Ovary (tissue), 10 donors: ENCODE measurements at regions of chr9 and their contacts with region 1.

Region 1: GRCh38 chr9:2620919-2621679 is 488 bp upstream of the VLDLR start:
- DNase-seq: peak; percentile 85 to 89 (median 87)
- H3K4me3 ChIP-seq: peak overlapping the region; percentile 86
- H3K27ac ChIP-seq: peak overlapping the region; percentile 91 to 95
- H3K4me1 ChIP-seq: peaks cover 2% of the 10 kb centered on the region
- H3K27me3 ChIP-seq: no peaks in the 10 kb centered on the region
- CTCF ChIP-seq: peak in 2 of 3 donors; percentile 20 to 37
- EP300 ChIP-seq: no peak
- POLR2A ChIP-seq: peak; percentile 60

Region 2: GRCh38 chr9:2132484-2133082 is 488.5 kb before region 1 on chr9:
- intact Hi-C with region 1: loop called in 3 of 4 experiments (anchors 10 kb)
- DNase-seq: no peak
- H3K4me3 ChIP-seq: no peak overlapping the region
- H3K27ac ChIP-seq: no peak overlapping the region
- H3K4me1 ChIP-seq: peaks cover 12% of the 10 kb centered on the region
- H3K27me3 ChIP-seq: no peaks in the 10 kb centered on the region
- CTCF ChIP-seq: peak; percentile 51 to 93 (median 82)
- EP300 ChIP-seq: no peak
- POLR2A ChIP-seq: no peak

Region 3: GRCh38 chr9:2234371-2234893 is 386.7 kb before region 1 on chr9:
- intact Hi-C with region 1: loop called in 1 of 4 experiments (anchors 10 kb)
- DNase-seq: peak; percentile 52 to 69 (median 57)
- H3K4me3 ChIP-seq: no peak overlapping the region
- H3K27ac ChIP-seq: peak overlapping the region in 1 of 2 donors; percentile 74
- H3K4me1 ChIP-seq: peaks cover 19% of the 10 kb centered on the region
- H3K27me3 ChIP-seq: no peaks in the 10 kb centered on the region
- CTCF ChIP-seq: no peak
- EP300 ChIP-seq: no peak
- POLR2A ChIP-seq: no peak

Region 4: GRCh38 chr9:2418619-2419018 is 202.5 kb before region 1 on chr9:
- intact Hi-C with region 1: loop called in 2 of 4 experiments (anchors 5 to 10 kb)
- DNase-seq: peak in 4 of 5 donors; percentile 36 to 49 (median 47)
- H3K4me3 ChIP-seq: no peak overlapping the region
- H3K27ac ChIP-seq: peak overlapping the region in 1 of 2 donors; percentile 77
- H3K4me1 ChIP-seq: peaks cover 8% of the 10 kb centered on the region
- H3K27me3 ChIP-seq: no peaks in the 10 kb centered on the region
- CTCF ChIP-seq: peak in 1 of 3 donors; percentile 10
- EP300 ChIP-seq: no peak
- POLR2A ChIP-seq: no peak

Region 5: DNA sequence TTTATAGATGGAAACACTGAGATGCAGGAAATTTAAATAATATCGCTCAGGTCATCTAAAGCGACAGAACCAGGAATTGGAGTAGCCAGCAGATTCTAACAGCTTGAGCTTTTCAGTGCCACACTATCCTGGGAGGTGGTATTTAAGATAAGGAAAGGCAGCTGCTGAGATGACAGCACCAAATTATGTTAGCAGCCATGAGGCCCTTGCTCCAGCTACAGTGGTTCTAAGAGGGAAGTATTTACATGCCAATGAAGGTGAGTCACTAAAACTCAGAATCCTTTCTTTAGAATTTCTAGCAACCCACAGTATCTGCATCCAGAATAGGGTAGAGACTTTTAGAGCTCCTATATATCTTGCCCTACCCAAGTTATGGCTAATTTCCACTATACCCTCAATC is 126.5 kb before region 1 on chr9:
- intact Hi-C with region 1: loop called in 1 of 4 experiments (anchors 5 kb)
- DNase-seq: no peak
- H3K4me3 ChIP-seq: no peak overlapping the region
- H3K27ac ChIP-seq: peak overlapping the region in 1 of 2 donors; percentile 82
- H3K4me1 ChIP-seq: peaks cover 18% of the 10 kb centered on the region
- H3K27me3 ChIP-seq: no peaks in the 10 kb centered on the region
- CTCF ChIP-seq: no peak
- EP300 ChIP-seq: no peak
- POLR2A ChIP-seq: no peak

Region 6: DNA sequence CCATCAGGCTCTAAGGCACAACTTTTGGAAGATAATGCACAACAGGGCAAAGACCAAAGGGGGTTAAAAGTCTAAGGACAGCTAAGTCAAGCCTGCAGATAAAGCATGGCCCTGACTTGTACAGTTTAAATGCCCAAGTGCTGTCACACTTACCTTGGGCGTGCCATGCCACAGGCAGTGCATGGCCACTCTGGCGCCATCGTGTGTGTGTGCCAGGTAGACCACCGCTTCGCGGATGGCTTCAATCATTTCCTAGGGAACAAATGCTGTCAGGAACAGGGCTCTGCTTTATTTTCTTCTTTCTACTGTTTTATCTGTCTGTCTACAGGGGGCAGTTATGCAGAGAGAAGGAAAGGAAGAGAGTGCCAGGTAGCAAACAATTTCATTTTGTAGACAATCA is 203.5 kb after region 1 on chr9:
- intact Hi-C with region 1: loop called in 1 of 4 experiments (anchors 10 kb)
- DNase-seq: no peak
- H3K4me3 ChIP-seq: no peak overlapping the region
- H3K27ac ChIP-seq: peak overlapping the region in 1 of 2 donors; percentile 13
- H3K4me1 ChIP-seq: no peaks in the 10 kb centered on the region
- H3K27me3 ChIP-seq: no peaks in the 10 kb centered on the region
- CTCF ChIP-seq: no peak
- EP300 ChIP-seq: no peak
- POLR2A ChIP-seq: no peak